IMR-90 (cell line): ENCODE measurements at regions of chr5 and their contacts with region 1.

Region 1: DNA sequence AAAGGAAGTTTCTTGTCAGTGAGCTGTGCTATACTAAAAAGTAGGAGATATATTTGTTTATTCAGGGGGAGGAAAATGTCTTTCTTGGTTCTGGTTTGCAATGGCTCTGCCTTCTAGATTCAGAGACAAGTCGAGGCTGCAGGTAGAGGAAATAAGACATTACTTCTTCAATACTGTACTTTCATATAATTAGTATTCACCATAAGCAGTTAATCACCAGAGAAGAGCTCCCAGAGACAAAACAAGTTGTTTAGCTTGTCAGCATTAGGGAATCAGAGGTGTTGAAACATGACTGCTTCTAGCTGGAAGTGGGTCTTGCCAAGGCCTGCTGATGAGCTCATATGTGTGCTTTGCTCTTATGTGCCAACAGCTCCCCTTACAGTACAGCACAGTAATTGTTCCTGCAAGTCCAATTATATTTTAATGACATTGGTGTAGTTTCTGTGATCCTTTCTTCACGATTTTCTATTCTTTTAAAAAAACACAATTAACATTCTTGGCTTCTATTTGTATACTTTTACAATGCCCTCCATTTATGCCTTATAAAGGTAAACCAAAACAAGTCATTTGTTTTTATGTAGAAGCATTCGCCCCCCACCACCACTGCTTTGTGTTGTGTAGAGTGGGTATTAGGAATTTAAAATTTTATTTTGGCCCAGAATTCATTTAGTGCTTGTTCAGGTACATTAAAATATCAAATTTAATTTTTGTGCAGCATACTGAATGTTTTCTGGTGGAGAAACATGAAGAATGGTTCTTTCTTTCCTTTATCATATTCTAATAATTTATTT is 112.2 kb downstream of the RPS23 start:
- DNase-seq: peak; percentile 95
- ATAC-seq: peak; percentile 79
- H3K4me3 ChIP-seq: no peak overlapping the region
- H3K27ac ChIP-seq: no peak overlapping the region
- H3K4me1 ChIP-seq: peaks cover 5% of the 10 kb centered on the region
- H3K27me3 ChIP-seq: no peaks in the 10 kb centered on the region
- CTCF ChIP-seq: peak; percentile 94
- POLR2A ChIP-seq: peak; percentile 36; the same call in 1 of the 2 replicates
- RAD21 ChIP-seq: peak; percentile 94

Region 2: GRCh38 chr5:81301271-81302015 is 864.5 kb before region 1 on chr5 and contains the start of gene ZCCHC9:
- CTCF ChIA-PET with region 1: no interaction called
- POLR2A ChIA-PET with region 1: no interaction called
- dilution Hi-C with region 1: no loop called
- in situ Hi-C with region 1: no loop called
- intact Hi-C with region 1: loop called (anchors 5 kb)
- DNase-seq: peak; percentile 96
- ATAC-seq: peak; percentile 87
- H3K4me3 ChIP-seq: peak within 1 kb of the TSS; percentile 61
- H3K27ac ChIP-seq: peak within 1 kb of the TSS; percentile 91
- H3K4me1 ChIP-seq: peaks cover 4% of the 10 kb centered on the region
- H3K27me3 ChIP-seq: no peaks in the 10 kb centered on the region
- CTCF ChIP-seq: peak; percentile 35
- POLR2A ChIP-seq: peak; percentile 94
- RAD21 ChIP-seq: no peak
- total RNA-seq, gene ZCCHC9: 24.6 and 41.1 TPM in 2 replicates

Region 3: DNA sequence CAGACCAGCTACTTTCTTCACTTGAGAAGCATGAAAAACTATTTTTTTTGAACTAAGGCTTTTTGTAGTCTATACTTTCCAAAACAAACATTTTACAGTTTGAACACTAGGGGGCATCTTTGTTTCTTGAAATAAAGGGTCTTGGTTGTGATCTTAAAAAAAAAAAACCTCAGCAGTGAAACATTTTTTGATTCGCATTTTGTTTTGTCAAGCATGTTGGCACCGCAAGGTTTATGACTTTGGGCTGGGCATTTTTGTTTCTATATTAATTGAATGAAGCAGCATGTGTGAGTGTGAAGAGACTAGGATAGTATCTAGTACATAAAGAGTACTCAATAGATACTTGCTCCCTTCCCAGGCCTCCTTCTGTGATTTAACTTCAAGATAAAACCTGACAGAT is 740.4 kb before region 1 on chr5:
- CTCF ChIA-PET with region 1: interaction called, 7 read pairs
- POLR2A ChIA-PET with region 1: no interaction called
- dilution Hi-C with region 1: no loop called
- in situ Hi-C with region 1: no loop called
- intact Hi-C with region 1: loop called (anchors 1 kb)
- DNase-seq: peak; percentile 65
- ATAC-seq: no peak
- H3K4me3 ChIP-seq: no peak overlapping the region
- H3K27ac ChIP-seq: peak overlapping the region; percentile 42; the same call in 1 of the 2 replicates
- H3K4me1 ChIP-seq: peaks cover 21% of the 10 kb centered on the region
- H3K27me3 ChIP-seq: no peaks in the 10 kb centered on the region
- CTCF ChIP-seq: peak; percentile 57
- POLR2A ChIP-seq: no peak
- RAD21 ChIP-seq: peak; percentile 61

Region 4: GRCh38 chr5:81971712-81972495 is 194.0 kb before region 1 on chr5 and contains the start of gene ATG10:
- CTCF ChIA-PET with region 1: interaction called, 3 read pairs
- POLR2A ChIA-PET with region 1: no interaction called
- dilution Hi-C with region 1: no loop called
- in situ Hi-C with region 1: no loop called
- intact Hi-C with region 1: loop called (anchors 2 kb)
- DNase-seq: peak; percentile 90
- ATAC-seq: peak; percentile 99
- H3K4me3 ChIP-seq: peak within 1 kb of the TSS; percentile 99
- H3K27ac ChIP-seq: peak within 1 kb of the TSS; percentile 98
- H3K4me1 ChIP-seq: no peaks in the 10 kb centered on the region
- H3K27me3 ChIP-seq: no peaks in the 10 kb centered on the region
- CTCF ChIP-seq: no peak
- POLR2A ChIP-seq: peak; percentile 92
- RAD21 ChIP-seq: no peak
- total RNA-seq, gene ATG10: 8.1 and 12.2 TPM in 2 replicates

Region 5: DNA sequence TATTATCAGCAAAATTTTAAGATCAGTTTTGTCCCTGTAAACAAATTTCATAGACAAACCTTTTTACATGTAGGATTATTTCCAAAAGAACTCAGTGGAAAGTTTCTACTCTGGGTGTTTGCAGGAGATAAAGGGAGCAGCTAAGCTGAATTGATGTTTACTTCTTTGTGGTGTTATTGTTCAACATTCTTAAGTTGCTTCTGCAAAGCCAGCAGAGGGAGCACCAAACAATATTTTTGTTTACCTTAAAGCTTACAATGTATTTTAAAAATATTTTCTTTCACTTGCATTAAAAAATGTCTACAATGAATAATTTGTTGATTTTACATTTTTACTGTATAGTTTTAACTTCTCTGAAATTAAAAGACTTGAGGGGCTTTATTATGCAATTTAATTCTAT is 58.7 kb before region 1 on chr5:
- CTCF ChIA-PET with region 1: interaction called, 5 read pairs
- POLR2A ChIA-PET with region 1: no interaction called
- dilution Hi-C with region 1: no loop called
- in situ Hi-C with region 1: no loop called
- intact Hi-C with region 1: loop called (anchors 5 kb)
- DNase-seq: peak; percentile 19
- ATAC-seq: peak; percentile 64
- H3K4me3 ChIP-seq: no peak overlapping the region
- H3K27ac ChIP-seq: no peak overlapping the region
- H3K4me1 ChIP-seq: no peaks in the 10 kb centered on the region
- H3K27me3 ChIP-seq: no peaks in the 10 kb centered on the region
- CTCF ChIP-seq: peak; percentile 41
- POLR2A ChIP-seq: no peak
- RAD21 ChIP-seq: 0 out of 2 replicates have a peak, but pooled peaks have one; percentile 19

Region 6: DNA sequence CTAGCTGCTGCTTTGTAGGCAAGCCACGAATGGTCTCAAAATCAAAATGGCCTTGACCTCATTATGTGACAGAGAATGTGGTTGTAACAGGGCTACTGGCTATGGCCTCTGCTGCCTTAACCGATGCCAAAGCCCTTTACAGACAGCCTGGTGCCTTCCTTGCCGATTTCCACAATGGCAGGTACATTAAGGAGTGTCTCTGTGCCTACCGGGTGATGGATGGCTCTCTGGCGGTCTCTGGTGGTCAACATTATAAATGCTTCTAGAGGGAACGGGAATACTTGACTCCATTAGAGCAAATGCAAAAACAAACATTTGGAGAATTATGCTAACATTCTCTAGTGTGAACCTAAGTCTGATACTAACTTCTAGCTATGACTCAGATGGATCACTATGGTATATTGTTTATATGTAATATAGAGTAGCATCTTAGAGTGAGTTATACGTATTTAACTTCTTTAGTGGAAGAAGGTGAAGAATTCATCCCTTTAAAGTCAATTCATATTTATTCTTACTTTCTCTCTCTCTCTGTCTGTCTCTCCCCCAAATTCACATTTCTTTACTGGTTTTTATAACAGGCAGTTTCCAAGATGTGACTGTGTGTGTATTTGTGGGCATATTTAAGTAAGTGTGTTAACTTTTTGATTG is 59.7 kb after region 1 on chr5:
- CTCF ChIA-PET with region 1: interaction called, 6 read pairs
- POLR2A ChIA-PET with region 1: no interaction called
- dilution Hi-C with region 1: no loop called
- in situ Hi-C with region 1: no loop called
- intact Hi-C with region 1: loop called (anchors 2 kb)
- DNase-seq: peak; percentile 85
- ATAC-seq: peak; percentile 96
- H3K4me3 ChIP-seq: no peak overlapping the region
- H3K27ac ChIP-seq: no peak overlapping the region; the same call in 1 of the 2 replicates
- H3K4me1 ChIP-seq: peaks cover 2% of the 10 kb centered on the region; the same call in 1 of the 2 replicates
- H3K27me3 ChIP-seq: no peaks in the 10 kb centered on the region
- CTCF ChIP-seq: peak; percentile 93
- POLR2A ChIP-seq: no peak
- RAD21 ChIP-seq: peak; percentile 89

Region 7: DNA sequence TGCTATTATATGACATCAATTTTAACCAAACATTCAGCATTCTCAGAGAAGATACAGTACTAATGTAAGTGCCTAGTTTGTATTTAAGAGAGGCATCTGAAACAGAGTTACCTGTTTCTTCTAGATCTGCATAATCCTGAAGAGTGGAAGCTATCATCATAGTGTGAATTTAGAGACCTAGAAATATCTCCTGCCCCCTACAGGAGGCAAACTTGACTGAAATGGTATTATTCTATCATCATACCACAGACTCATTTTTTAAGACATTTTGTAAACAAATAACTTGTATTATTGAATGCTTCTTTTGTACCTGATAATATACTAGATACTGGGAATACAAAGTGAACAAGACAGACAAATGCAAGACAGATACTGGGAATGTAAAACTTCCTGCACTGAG is 329.0 kb after region 1 on chr5:
- CTCF ChIA-PET with region 1: no interaction called
- POLR2A ChIA-PET with region 1: no interaction called
- dilution Hi-C with region 1: no loop called
- in situ Hi-C with region 1: no loop called
- intact Hi-C with region 1: no loop called
- DNase-seq: peak; percentile 5
- ATAC-seq: no peak
- H3K4me3 ChIP-seq: no peak overlapping the region
- H3K27ac ChIP-seq: no peak overlapping the region
- H3K4me1 ChIP-seq: no peaks in the 10 kb centered on the region
- H3K27me3 ChIP-seq: peaks cover 4% of the 10 kb centered on the region; the same call in 1 of the 2 replicates
- CTCF ChIP-seq: peak; percentile 38
- POLR2A ChIP-seq: no peak
- RAD21 ChIP-seq: peak; percentile 36